Activated naive CD4-positive, alpha-beta T cell treated with anti-CD3 and anti-CD28 coated beads for 36 hours (primary cell): ENCODE measurements at regions of chr6 and their contacts with region 1.

Region 1: DNA sequence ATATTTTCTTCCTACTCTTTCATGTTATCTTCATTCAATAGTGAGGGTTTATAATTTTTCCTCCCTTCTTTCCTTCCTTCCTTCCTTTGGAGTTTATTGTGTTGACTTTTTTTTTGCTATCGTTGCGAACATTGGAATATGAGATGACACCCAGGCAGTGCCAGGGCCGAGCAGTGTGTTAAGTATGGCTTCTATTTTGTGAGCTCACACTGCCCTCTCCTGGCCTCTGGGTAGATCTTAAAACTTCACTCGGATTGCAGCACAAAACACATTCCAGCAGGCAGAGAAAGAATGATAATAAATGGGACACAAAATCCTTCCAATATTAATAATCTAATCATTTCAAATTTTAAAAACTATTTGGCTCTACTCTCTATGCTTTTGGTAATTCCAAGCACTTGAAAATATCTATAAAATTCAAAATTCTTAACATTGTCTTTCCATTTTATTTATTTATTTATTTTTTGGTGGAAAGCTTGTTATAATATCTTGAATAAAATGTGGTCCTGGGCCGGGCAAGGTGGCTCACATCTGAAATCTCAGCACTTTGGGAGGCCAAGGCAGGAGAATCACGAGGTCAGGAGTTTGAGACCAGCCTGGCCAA is 147.4 kb upstream of the OLIG3 start:
- DNase-seq: peak; percentile 84
- H3K4me3 Mint-ChIP-seq: no peak overlapping the region
- H3K27ac Mint-ChIP-seq: no peak overlapping the region
- H3K4me1 Mint-ChIP-seq: peaks cover 13% of the 10 kb centered on the region
- H3K27me3 Mint-ChIP-seq: no peaks in the 10 kb centered on the region

Region 2: GRCh38 chr6:136967876-136968752 is 673.5 kb before region 1 on chr6:
- CTCF ChIA-PET with region 1: interaction called, 3 read pairs
- intact Hi-C with region 1: loop called (anchors 1 kb)
- DNase-seq: peak; percentile 80
- H3K4me3 Mint-ChIP-seq: no peak overlapping the region
- H3K27ac Mint-ChIP-seq: no peak overlapping the region
- H3K4me1 Mint-ChIP-seq: no peaks in the 10 kb centered on the region
- H3K27me3 Mint-ChIP-seq: peaks cover 10% of the 10 kb centered on the region

Region 3: GRCh38 chr6:137094411-137095008 is 547.1 kb before region 1 on chr6:
- CTCF ChIA-PET with region 1: no interaction called
- intact Hi-C with region 1: loop called (anchors 1 kb)
- DNase-seq: peak; percentile 75
- H3K4me3 Mint-ChIP-seq: no peak overlapping the region
- H3K27ac Mint-ChIP-seq: no peak overlapping the region
- H3K4me1 Mint-ChIP-seq: peaks cover 13% of the 10 kb centered on the region
- H3K27me3 Mint-ChIP-seq: peaks cover 3% of the 10 kb centered on the region

Region 4: DNA sequence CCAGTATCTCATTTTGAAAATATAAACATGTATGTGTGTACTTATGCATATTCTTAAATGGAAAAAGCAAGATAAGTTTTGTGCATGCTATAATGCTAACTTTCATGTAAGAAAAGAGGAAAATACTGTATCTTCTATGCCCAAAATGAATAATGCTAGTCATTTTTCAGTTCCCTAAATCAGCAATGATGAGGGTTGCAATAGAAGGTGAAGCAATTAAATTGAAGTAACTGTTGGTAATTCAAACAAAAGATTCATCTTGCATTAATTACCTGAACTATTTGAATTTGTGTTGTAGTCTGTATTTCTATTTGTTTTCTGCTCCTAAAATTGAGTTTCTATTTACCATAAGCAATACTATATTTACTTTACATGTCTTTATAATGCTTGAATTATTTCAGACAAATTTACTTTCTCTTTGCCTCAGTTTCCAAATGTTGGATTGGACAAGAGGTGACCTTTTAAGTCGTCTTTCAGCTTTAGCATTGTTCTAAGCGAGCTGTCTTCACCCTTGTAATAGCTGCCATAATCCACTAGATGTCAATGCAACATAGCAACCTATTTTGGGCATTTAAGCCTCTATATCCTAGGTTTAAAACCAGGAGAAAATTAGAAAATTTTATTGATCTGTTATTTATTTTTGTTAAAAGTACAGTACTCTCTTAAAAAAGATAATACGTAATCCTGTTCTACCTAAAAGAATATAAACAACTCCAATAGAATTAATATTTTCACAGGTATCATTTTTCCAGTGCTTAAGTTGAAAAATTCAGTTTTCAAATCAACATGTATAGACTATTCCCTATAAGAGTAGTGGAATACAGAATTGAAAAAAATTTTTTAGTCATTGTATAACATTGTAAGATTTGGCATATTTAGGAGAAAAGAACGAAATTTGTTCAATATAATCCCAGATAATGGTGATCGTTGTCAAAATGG is 370.1 kb before region 1 on chr6:
- CTCF ChIA-PET with region 1: interaction called, 3 read pairs
- intact Hi-C with region 1: loop called (anchors 1 kb)
- DNase-seq: no peak
- H3K4me3 Mint-ChIP-seq: no peak overlapping the region
- H3K27ac Mint-ChIP-seq: no peak overlapping the region
- H3K4me1 Mint-ChIP-seq: no peaks in the 10 kb centered on the region
- H3K27me3 Mint-ChIP-seq: peaks cover 9% of the 10 kb centered on the region

Region 5: GRCh38 chr6:137341681-137342195 is 299.8 kb before region 1 on chr6:
- CTCF ChIA-PET with region 1: interaction called, 4 read pairs
- intact Hi-C with region 1: loop called (anchors 1 kb)
- DNase-seq: peak; percentile 69
- H3K4me3 Mint-ChIP-seq: peak overlapping the region; percentile 12
- H3K27ac Mint-ChIP-seq: no peak overlapping the region
- H3K4me1 Mint-ChIP-seq: peaks cover 7% of the 10 kb centered on the region
- H3K27me3 Mint-ChIP-seq: no peaks in the 10 kb centered on the region

Region 6: DNA sequence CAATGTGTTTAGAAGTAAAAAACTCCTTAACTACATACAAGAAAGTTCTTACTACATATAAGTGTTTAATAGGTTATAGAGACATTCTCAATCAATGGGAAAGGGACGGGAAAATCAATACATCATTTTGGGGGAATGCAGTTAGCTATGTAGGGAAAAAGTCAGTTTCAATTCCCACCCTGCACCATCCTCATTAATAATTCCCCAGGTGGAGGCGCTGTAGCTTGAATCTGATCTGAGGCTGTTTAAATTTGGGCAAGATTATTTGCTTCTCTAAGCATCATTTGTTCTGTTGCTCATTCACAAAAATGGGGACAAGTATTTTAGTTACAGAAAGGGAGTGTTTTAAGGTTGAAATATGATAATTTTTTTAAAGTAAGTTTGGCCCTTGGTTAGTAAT is 166.5 kb before region 1 on chr6:
- CTCF ChIA-PET with region 1: no interaction called
- intact Hi-C with region 1: loop called (anchors 1 kb)
- DNase-seq: no peak
- H3K4me3 Mint-ChIP-seq: no peak overlapping the region
- H3K27ac Mint-ChIP-seq: no peak overlapping the region
- H3K4me1 Mint-ChIP-seq: no peaks in the 10 kb centered on the region
- H3K27me3 Mint-ChIP-seq: peaks cover 6% of the 10 kb centered on the region

Region 7: GRCh38 chr6:137680705-137681346 is 39.2 kb after region 1 on chr6:
- CTCF ChIA-PET with region 1: no interaction called
- intact Hi-C with region 1: loop called (anchors 1 kb)
- DNase-seq: no peak
- H3K4me3 Mint-ChIP-seq: no peak overlapping the region
- H3K27ac Mint-ChIP-seq: peak overlapping the region; percentile 84
- H3K4me1 Mint-ChIP-seq: peaks cover 54% of the 10 kb centered on the region
- H3K27me3 Mint-ChIP-seq: peaks cover 8% of the 10 kb centered on the region

Region 8: DNA sequence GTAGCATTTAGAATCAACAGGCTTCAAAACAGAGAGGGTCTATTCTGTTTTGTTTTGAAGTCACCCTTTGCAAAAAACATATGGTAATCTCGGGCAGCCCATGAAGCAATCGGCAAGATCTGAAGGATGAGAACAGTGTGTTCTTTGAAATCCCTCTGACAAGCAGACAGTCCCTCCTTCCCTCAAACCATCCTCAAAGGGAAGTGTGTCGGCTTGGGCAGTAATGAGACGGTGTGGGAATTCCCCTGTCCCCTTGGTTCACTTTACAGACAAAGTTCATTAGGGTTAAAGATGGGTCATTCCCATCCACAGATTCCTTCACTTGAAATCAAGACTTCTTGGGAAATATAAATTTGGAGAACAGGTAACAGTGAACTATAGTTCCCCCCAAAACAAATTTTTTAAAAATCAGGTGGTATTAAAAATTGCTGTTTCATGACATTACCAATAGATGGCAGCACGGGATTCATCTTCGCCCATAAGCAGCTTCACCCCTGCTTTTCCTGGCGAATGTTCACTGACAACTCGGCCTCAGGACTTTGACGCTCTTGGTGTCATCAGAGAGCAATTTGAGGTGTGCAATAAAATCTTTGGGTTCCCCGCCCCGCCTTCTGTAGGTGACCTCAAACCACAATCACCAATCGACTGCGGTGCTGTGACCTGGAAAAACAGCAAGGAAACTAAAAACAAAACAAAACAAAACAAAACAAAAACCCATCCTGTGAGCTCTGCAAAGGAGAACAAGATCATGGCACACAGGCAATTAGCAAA is 66.2 kb after region 1 on chr6:
- CTCF ChIA-PET with region 1: no interaction called
- intact Hi-C with region 1: no loop called
- DNase-seq: peak; percentile 89
- H3K4me3 Mint-ChIP-seq: peak overlapping the region; percentile 58
- H3K27ac Mint-ChIP-seq: peak overlapping the region; percentile 86
- H3K4me1 Mint-ChIP-seq: peaks cover 58% of the 10 kb centered on the region
- H3K27me3 Mint-ChIP-seq: no peaks in the 10 kb centered on the region